CD8-positive, alpha-beta T cell (primary cell): ENCODE measurements at regions of chr10 and their contacts with region 1.

Region 1: GRCh38 chr10:113385021-113385999 is 167.5 kb upstream of the HABP2 start:
- DNase-seq: peak; percentile 30 to 84 (median 61)
- ATAC-seq: peak; percentile 84
- H3K4me3 ChIP-seq: peak overlapping the region in 1 of 2 experiments; percentile 21
- H3K4me3 Mint-ChIP-seq: peak overlapping the region; percentile 57
- H3K27ac ChIP-seq: no peak overlapping the region
- H3K27ac Mint-ChIP-seq: no peak overlapping the region
- H3K4me1 ChIP-seq: peaks cover 17% of the 10 kb centered on the region
- H3K4me1 Mint-ChIP-seq: peaks cover 28% of the 10 kb centered on the region
- H3K27me3 ChIP-seq: no peaks in the 10 kb centered on the region
- H3K27me3 Mint-ChIP-seq: no peaks in the 10 kb centered on the region
- CTCF ChIP-seq: peak; percentile 74

Region 2: GRCh38 chr10:112446855-112447711 is 938.2 kb before region 1 on chr10 and contains the starts of genes VTI1A and ZDHHC6:
- CTCF ChIA-PET with region 1: interaction called, 3 read pairs
- POLR2A ChIA-PET with region 1: no interaction called
- intact Hi-C with region 1: loop called in 1 of 2 experiments (anchors 10 kb)
- DNase-seq: peak; percentile 68 to 92 (median 85)
- ATAC-seq: peak; percentile 88
- H3K4me3 ChIP-seq: peak within 1 kb of the TSS; percentile 93 to 96
- H3K4me3 Mint-ChIP-seq: peak within 1 kb of the TSS; percentile 94
- H3K27ac ChIP-seq: peak within 1 kb of the TSS; percentile 91 to 92
- H3K27ac Mint-ChIP-seq: peak within 1 kb of the TSS; percentile 95
- H3K4me1 ChIP-seq: peaks cover 24% of the 10 kb centered on the region
- H3K4me1 Mint-ChIP-seq: peaks cover 66% of the 10 kb centered on the region
- H3K27me3 ChIP-seq: no peaks in the 10 kb centered on the region
- H3K27me3 Mint-ChIP-seq: no peaks in the 10 kb centered on the region
- CTCF ChIP-seq: no peak
- total RNA-seq, gene VTI1A: 59.0 to 62.7 TPM
- total RNA-seq, gene ZDHHC6: 41.4 to 41.7 TPM

Region 3: DNA sequence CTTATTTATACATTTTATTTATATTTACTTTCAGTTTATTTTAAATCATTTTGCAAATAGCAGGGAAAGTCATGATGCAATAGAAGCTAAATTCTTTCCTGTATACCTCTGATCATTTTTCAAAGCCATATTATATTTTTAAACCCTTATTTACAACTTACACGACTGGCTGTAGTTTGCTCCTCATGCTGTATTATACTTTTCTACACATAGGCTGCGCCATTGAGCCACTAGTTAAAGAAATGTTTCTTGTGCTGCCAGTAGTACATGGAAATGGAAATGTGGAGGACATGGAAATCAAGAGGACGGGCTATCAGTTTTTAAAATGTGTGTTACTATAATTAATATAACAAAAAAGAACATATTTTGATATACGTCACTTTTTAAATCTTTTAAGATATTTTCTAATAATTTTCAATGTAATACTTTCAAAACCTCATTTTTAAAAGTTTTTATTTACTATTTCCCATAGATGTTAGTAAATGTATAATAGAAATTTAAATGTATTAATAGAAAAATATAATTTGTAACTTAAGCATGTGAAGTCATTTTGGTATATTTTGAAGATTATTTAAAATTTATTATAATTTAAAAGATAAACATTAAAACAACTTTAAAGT is 819.8 kb before region 1 on chr10:
- CTCF ChIA-PET with region 1: no interaction called
- POLR2A ChIA-PET with region 1: no interaction called
- intact Hi-C with region 1: loop called in 1 of 2 experiments (anchors 2 kb)
- DNase-seq: peak in 2 of 9 experiments; percentile 21 to 31
- ATAC-seq: no peak
- H3K4me3 ChIP-seq: no peak overlapping the region
- H3K4me3 Mint-ChIP-seq: no peak overlapping the region
- H3K27ac ChIP-seq: no peak overlapping the region
- H3K27ac Mint-ChIP-seq: no peak overlapping the region
- H3K4me1 ChIP-seq: no peaks in the 10 kb centered on the region
- H3K4me1 Mint-ChIP-seq: no peaks in the 10 kb centered on the region
- H3K27me3 ChIP-seq: no peaks in the 10 kb centered on the region
- H3K27me3 Mint-ChIP-seq: no peaks in the 10 kb centered on the region
- CTCF ChIP-seq: peak; percentile 27

Region 4: GRCh38 chr10:112810472-112811151 is 574.7 kb before region 1 on chr10:
- CTCF ChIA-PET with region 1: no interaction called
- POLR2A ChIA-PET with region 1: no interaction called
- intact Hi-C with region 1: no loop called
- DNase-seq: no peak
- ATAC-seq: no peak
- H3K4me3 ChIP-seq: no peak overlapping the region
- H3K4me3 Mint-ChIP-seq: no peak overlapping the region
- H3K27ac ChIP-seq: no peak overlapping the region
- H3K27ac Mint-ChIP-seq: no peak overlapping the region
- H3K4me1 ChIP-seq: no peaks in the 10 kb centered on the region
- H3K4me1 Mint-ChIP-seq: no peaks in the 10 kb centered on the region
- H3K27me3 ChIP-seq: no peaks in the 10 kb centered on the region
- H3K27me3 Mint-ChIP-seq: no peaks in the 10 kb centered on the region
- CTCF ChIP-seq: no peak

Region 5: DNA sequence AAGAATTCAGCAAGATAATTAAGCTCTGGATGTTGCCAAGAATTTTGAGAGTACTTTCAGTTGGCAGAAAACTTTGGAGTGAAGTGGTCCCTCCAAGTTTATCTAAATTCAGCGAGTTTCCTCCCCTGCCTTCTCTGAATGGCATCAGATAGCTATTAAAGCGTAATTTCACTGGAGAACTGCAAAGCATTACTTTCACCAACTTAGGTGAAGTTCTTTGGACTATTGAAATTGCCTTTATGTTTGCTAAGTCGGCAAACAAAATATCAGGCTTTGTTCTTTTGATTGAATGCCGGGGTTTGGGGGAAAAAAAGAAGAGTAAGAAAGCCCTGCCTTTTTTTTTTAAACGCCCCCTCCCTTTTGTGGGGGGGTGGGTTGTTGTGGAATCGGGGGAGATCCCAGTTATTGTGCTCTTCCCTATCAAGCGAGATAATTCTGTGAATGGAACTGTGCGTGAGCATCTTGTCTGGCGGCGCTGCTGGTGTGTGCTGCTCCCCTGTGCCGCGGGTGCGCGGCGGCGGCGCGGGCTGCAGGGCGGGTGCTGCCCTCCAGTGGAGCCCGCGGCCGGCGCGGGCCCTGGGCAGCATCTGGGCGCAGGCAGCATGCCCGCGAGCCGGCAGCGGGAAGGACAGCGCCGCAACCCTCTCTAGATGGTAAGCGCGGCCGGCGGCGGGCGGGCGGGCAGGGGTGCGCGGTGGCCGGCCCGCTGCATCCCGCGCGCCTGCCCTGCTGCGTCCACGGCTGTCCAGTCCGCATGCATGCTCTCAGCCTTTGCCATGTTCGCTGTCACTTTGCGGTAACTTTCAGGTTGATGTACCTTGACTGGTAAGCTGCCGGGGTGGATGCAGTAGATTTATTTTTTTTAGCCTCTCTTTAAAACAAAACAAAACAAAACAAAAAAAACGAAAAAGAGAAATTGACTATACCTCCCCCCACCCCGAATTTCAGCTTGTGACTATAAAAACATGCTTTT is 258.8 kb before region 1 on chr10:
- CTCF ChIA-PET with region 1: interaction called, 7 read pairs
- POLR2A ChIA-PET with region 1: no interaction called
- intact Hi-C with region 1: loop called (anchors 10 kb)
- DNase-seq: peak; percentile 7 to 70 (median 45)
- ATAC-seq: peak; percentile 91
- H3K4me3 ChIP-seq: no peak overlapping the region
- H3K4me3 Mint-ChIP-seq: peak overlapping the region; percentile 57
- H3K27ac ChIP-seq: no peak overlapping the region
- H3K27ac Mint-ChIP-seq: no peak overlapping the region
- H3K4me1 ChIP-seq: peaks cover 5% of the 10 kb centered on the region
- H3K4me1 Mint-ChIP-seq: peaks cover 6% of the 10 kb centered on the region
- H3K27me3 ChIP-seq: peaks cover 0 to 2% of the 10 kb centered on the region in 2 experiments
- H3K27me3 Mint-ChIP-seq: peaks cover 25% of the 10 kb centered on the region
- CTCF ChIP-seq: peak; percentile 49